ENCODE measurements at regions of chr1 and their contacts with region 1.

Region 1: DNA sequence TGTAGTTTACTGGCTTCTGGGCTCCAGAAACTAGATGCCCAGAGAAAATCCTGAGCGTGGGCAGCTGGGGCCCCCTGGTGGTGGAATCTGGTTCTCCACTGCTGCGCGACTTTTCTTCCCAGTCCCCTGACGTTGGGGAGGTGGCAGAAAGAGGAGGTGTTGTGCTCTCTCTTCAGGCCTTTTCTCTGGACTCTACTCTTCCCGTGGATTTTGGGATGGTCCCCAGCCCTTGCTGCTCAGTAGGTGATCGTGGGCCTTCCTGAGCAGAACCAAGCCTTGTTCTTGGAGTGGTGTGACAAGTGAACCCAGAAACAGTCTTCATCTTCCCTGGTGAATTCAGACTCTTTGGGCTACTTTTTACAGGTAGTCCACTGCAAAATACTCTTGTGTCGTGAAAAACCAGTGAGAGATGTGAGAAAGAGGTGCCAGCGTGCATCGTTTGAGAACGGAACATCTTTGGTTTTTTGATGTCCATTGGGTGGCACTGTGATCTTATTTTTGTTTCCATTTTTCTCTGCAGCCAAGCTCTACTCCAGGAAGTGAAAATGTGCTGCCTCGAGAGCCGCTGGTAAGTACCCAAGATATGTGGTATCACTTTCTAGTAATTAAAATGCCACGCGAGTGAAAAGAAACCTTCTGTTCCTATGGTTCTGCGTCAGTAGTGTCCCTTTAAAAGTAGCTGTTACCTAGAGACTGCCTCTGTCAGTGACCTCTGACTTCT is 20.2 kb downstream of the PEX14 start:
- DNase-seq: no peak
- H3K4me3 ChIP-seq: peak overlapping the region; percentile 46
- CTCF ChIP-seq: peak; percentile 92

Region 2: GRCh38 chr1:10430216-10431069 is 64.5 kb before region 1 on chr1 and contains the start of gene CENPS:
- CTCF ChIA-PET with region 1: interaction called, 332 read pairs
- POLR2A ChIA-PET with region 1: interaction called, 5 read pairs
- DNase-seq: no peak
- H3K4me3 ChIP-seq: peak within 1 kb of the TSS; percentile 90
- CTCF ChIP-seq: peak; percentile 91

Region 3: GRCh38 chr1:10444795-10445397 is 50.0 kb before region 1 on chr1:
- CTCF ChIA-PET with region 1: interaction called, 13 read pairs
- POLR2A ChIA-PET with region 1: no interaction called
- DNase-seq: no peak
- H3K4me3 ChIP-seq: no peak overlapping the region
- CTCF ChIP-seq: no peak

Region 4: GRCh38 chr1:10456661-10457060 is 38.3 kb before region 1 on chr1:
- CTCF ChIA-PET with region 1: interaction called, 25 read pairs
- POLR2A ChIA-PET with region 1: interaction called, 3 read pairs
- DNase-seq: no peak
- H3K4me3 ChIP-seq: no peak overlapping the region
- CTCF ChIP-seq: no peak

Region 5: GRCh38 chr1:10484521-10484920 is 10.4 kb before region 1 on chr1:
- CTCF ChIA-PET with region 1: interaction called, 69 read pairs
- POLR2A ChIA-PET with region 1: no interaction called
- DNase-seq: no peak
- H3K4me3 ChIP-seq: no peak overlapping the region
- CTCF ChIP-seq: no peak

Region 6: GRCh38 chr1:10522322-10522860 is 27.5 kb after region 1 on chr1:
- CTCF ChIA-PET with region 1: interaction called, 12 read pairs
- POLR2A ChIA-PET with region 1: no interaction called
- DNase-seq: no peak
- H3K4me3 ChIP-seq: no peak overlapping the region
- CTCF ChIP-seq: no peak

Region 7: DNA sequence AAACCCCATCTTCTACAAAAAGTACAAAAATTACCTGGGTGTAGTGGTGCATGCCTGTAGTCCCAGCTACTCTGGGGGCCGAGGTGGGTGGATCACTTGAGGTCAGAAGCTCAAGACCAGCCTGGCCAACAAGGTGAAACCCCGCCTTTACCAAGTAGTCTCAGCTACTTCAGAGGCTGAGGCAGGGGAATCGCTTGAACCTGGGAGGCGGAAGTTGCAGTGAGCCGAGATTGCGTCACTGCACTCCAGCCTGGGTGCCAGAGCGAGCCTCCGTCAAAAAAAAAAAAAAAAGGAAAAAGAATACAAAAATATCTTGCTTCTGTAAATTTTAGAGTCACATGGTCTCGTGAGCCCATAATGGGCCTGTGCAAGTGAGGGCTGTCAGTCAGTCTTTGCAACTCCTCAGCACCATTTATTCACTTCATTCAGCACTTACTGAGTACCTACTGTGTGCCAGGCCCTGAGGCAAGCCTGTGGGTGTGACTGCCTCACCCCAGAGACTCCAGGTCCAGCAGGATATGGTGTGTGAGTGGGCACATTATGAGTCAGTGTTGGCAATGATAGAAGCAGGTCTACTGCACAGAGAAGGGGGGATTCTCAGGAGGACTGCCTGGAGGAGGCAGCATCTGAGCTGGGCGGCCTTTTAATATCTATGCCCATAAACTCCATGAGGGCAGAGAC is 470.8 kb after region 1 on chr1:
- CTCF ChIA-PET with region 1: interaction called, 11 read pairs
- POLR2A ChIA-PET with region 1: no interaction called
- DNase-seq: no peak
- H3K4me3 ChIP-seq: no peak overlapping the region
- CTCF ChIP-seq: no peak

Measured in AG04449 (cell line).